ENCODE measurements at regions of chr11 and their contacts with region 1.

Region 1: GRCh38 chr11:68146704-68147474 is 25.7 kb upstream of the CHKA start:
- DNase-seq: peak; percentile 97
- ATAC-seq: peak; percentile 89
- H3K4me3 ChIP-seq: peak overlapping the region; percentile 43 to 76 (median 44)
- H3K27ac ChIP-seq: peak overlapping the region; percentile 98
- H3K4me1 ChIP-seq: peaks cover 84% of the 10 kb centered on the region
- H3K27me3 ChIP-seq: no peaks in the 10 kb centered on the region; a peak in 1 of 5 replicates
- CTCF ChIP-seq: peak; percentile 35; the same call in 1 of the 2 replicates
- EP300 ChIP-seq: peak in 1 of 2 experiments; percentile 92
- POLR2A ChIP-seq: peak; percentile 94 to 97
- RAD21 ChIP-seq: peak; percentile 73; the same call in 1 of the 2 replicates

Region 2: GRCh38 chr11:67464411-67465183 is 682.3 kb before region 1 on chr11:
- CTCF ChIA-PET with region 1: no interaction called
- POLR2A ChIA-PET with region 1: no interaction called
- in situ Hi-C with region 1: no loop called
- intact Hi-C with region 1: no loop called
- DNase-seq: peak; percentile 86
- ATAC-seq: peak; percentile 83
- H3K4me3 ChIP-seq: peak overlapping the region; percentile 57 to 97 (median 80)
- H3K27ac ChIP-seq: peak overlapping the region; percentile 71
- H3K4me1 ChIP-seq: peaks cover 48% of the 10 kb centered on the region
- H3K27me3 ChIP-seq: no peaks in the 10 kb centered on the region; a peak in 1 of 5 replicates
- CTCF ChIP-seq: peak; percentile 23; the same call in 1 of the 2 replicates
- EP300 ChIP-seq: no peak
- POLR2A ChIP-seq: peak; percentile 70 to 89; a peak in 3 of 4 replicates
- RAD21 ChIP-seq: no peak

Region 3: GRCh38 chr11:68099474-68100405 is 47.1 kb before region 1 on chr11:
- CTCF ChIA-PET with region 1: no interaction called
- POLR2A ChIA-PET with region 1: interaction called, 10 read pairs
- in situ Hi-C with region 1: no loop called
- intact Hi-C with region 1: no loop called
- DNase-seq: peak; percentile 99
- ATAC-seq: peak; percentile 95
- H3K4me3 ChIP-seq: peak overlapping the region in 2 of 3 experiments; percentile 22 to 23; a peak in 2 of 6 replicates
- H3K27ac ChIP-seq: peak overlapping the region; percentile 94
- H3K4me1 ChIP-seq: peaks cover 80% of the 10 kb centered on the region
- H3K27me3 ChIP-seq: no peaks in the 10 kb centered on the region
- CTCF ChIP-seq: no peak
- EP300 ChIP-seq: peak in 1 of 2 experiments; percentile 96; a peak in 3 of 4 replicates
- POLR2A ChIP-seq: peak in 1 of 2 experiments; percentile 76; a peak in 2 of 4 replicates
- RAD21 ChIP-seq: no peak

Region 4: GRCh38 chr11:68121067-68121899 is 25.6 kb before region 1 on chr11 and contains the start of gene CHKA:
- CTCF ChIA-PET with region 1: no interaction called
- POLR2A ChIA-PET with region 1: interaction called, 196 read pairs
- in situ Hi-C with region 1: no loop called
- intact Hi-C with region 1: loop called (anchors 1 kb)
- DNase-seq: peak; percentile 84
- ATAC-seq: peak; percentile 78
- H3K4me3 ChIP-seq: peak within 1 kb of the TSS; percentile 78 to 93 (median 91)
- H3K27ac ChIP-seq: peak within 1 kb of the TSS; percentile 98
- H3K4me1 ChIP-seq: peaks cover 68% of the 10 kb centered on the region
- H3K27me3 ChIP-seq: no peaks in the 10 kb centered on the region; a peak in 1 of 5 replicates
- CTCF ChIP-seq: peak; percentile 26; the same call in 1 of the 2 replicates
- EP300 ChIP-seq: no peak
- POLR2A ChIP-seq: no peak
- RAD21 ChIP-seq: no peak; the same call in 1 of the 2 replicates
- total RNA-seq, gene CHKA: 83.6 and 92.7 TPM in 2 replicates

Region 5: DNA sequence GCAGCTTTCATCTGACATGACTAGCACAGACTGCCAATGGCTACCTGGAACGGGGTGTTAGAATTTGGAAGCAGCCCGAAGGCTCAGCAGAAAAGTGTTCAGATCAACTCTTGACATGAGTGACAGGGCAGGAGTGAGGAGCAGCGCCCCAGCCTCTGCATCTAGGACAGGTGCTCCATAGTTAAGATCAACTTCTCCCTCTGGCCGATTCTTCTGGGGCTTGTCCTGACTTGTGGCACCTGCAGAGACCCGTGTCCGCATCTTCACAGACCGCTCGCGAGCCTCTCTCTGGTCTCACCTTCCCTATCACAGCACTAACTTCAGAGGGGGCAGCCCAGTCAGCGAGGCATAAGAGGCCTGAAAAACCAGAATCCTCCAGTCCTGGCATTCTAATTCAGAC is 16.8 kb after region 1 on chr11:
- CTCF ChIA-PET with region 1: no interaction called
- POLR2A ChIA-PET with region 1: interaction called, 11 read pairs
- in situ Hi-C with region 1: no loop called
- intact Hi-C with region 1: no loop called
- DNase-seq: no peak
- ATAC-seq: no peak
- H3K4me3 ChIP-seq: no peak overlapping the region
- H3K27ac ChIP-seq: no peak overlapping the region
- H3K4me1 ChIP-seq: peaks cover 3% of the 10 kb centered on the region; the same call in 1 of the 2 replicates
- H3K27me3 ChIP-seq: no peaks in the 10 kb centered on the region
- CTCF ChIP-seq: no peak
- EP300 ChIP-seq: no peak
- POLR2A ChIP-seq: no peak
- RAD21 ChIP-seq: no peak

Region 6: DNA sequence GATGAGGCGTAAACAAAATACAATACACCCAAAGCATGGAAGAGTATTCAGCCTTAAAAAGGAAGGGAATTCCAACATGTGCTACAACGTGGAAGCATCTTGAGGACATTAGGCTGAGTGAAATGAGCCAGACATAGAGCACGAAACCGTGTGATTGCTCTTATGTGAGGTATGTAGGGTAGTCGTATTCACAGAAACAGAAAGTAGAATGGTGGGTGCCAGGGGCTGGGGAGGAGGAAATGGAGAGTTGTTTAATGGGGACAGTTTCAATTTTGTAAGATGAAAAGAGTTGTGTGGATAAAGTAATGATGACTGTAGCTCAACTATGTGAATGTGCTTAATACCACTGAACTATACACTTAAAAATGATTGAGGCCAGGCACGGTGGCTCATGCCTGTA is 76.4 kb after region 1 on chr11:
- CTCF ChIA-PET with region 1: no interaction called
- POLR2A ChIA-PET with region 1: no interaction called
- in situ Hi-C with region 1: no loop called
- intact Hi-C with region 1: no loop called
- DNase-seq: no peak
- ATAC-seq: no peak
- H3K4me3 ChIP-seq: no peak overlapping the region
- H3K27ac ChIP-seq: no peak overlapping the region
- H3K4me1 ChIP-seq: no peaks in the 10 kb centered on the region
- H3K27me3 ChIP-seq: peaks cover 0 to 11% of the 10 kb centered on the region in 2 experiments; a peak in 4 of 5 replicates
- CTCF ChIP-seq: no peak
- EP300 ChIP-seq: no peak
- POLR2A ChIP-seq: no peak
- RAD21 ChIP-seq: no peak